Panc1 (cell line): ENCODE measurements at regions of chr19 and their contacts with region 1.

Region 1: GRCh38 chr19:33241530-33242101 is 16.0 kb upstream of the SLC7A10 start:
- DNase-seq: no peak
- ATAC-seq: peak; percentile 56
- H3K4me3 ChIP-seq: no peak overlapping the region
- H3K27ac ChIP-seq: no peak overlapping the region
- H3K4me1 ChIP-seq: no peaks in the 10 kb centered on the region; the same call in 1 of the 2 replicates
- H3K27me3 ChIP-seq: no peaks in the 10 kb centered on the region
- CTCF ChIP-seq: peak; percentile 97

Region 2: DNA sequence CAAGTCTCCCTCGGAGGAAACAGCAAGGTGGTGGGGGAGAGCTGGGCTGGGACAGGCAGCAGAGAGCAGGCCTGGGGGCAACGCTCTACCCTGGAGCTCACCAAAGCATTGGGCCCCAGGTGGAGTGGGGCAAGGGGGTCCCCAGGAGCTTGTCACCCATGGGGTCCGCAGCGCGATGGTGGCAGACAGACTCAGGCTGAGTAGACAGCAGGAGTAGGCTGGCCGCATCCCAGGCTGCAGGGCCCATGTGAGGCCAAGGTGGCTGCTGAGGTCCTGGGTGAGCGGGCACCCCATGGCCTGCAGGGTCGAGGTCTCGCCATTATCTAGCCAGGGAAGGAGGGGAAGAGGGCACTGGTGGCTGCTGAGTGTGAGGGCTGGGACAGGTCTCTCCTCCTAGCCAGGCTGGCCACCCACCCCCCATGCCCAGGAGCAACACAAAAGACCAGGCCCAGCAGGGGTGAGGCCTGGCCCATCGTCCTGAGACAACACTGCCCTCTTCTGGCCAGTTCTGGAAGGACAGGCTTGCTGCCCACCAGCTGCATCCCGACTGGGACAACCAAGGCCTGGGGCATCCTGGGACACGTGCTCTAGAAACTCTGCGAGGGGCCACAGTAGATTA is 165.0 kb after region 1 on chr19:
- CTCF ChIA-PET with region 1: interaction called, 17 read pairs
- POLR2A ChIA-PET with region 1: no interaction called
- in situ Hi-C with region 1: no loop called
- intact Hi-C with region 1: loop called (anchors 2 kb)
- DNase-seq: peak; percentile 43
- ATAC-seq: peak; percentile 86
- H3K4me3 ChIP-seq: no peak overlapping the region
- H3K27ac ChIP-seq: no peak overlapping the region
- H3K4me1 ChIP-seq: no peaks in the 10 kb centered on the region
- H3K27me3 ChIP-seq: no peaks in the 10 kb centered on the region
- CTCF ChIP-seq: peak; percentile 98

Region 3: GRCh38 chr19:33771384-33772101 is 529.9 kb after region 1 on chr19:
- CTCF ChIA-PET with region 1: no interaction called
- POLR2A ChIA-PET with region 1: interaction called, 5 read pairs
- in situ Hi-C with region 1: no loop called
- intact Hi-C with region 1: loop called (anchors 5 kb)
- DNase-seq: no peak
- ATAC-seq: peak; percentile 89
- H3K4me3 ChIP-seq: no peak overlapping the region
- H3K27ac ChIP-seq: no peak overlapping the region
- H3K4me1 ChIP-seq: no peaks in the 10 kb centered on the region
- H3K27me3 ChIP-seq: peaks cover 11% of the 10 kb centered on the region
- CTCF ChIP-seq: peak; percentile 96